ENCODE measurements at regions of chr1 and their contacts with region 1.

Region 1: GRCh38 chr1:153990468-153991150 is at the start of gene RPS27:
- DNase-seq: peak; percentile 95
- ATAC-seq: peak; percentile 82
- H3K4me3 Mint-ChIP-seq: peak within 1 kb of the TSS; percentile 98
- H3K27ac Mint-ChIP-seq: peak within 1 kb of the TSS; percentile 99
- H3K4me1 Mint-ChIP-seq: peaks cover 45% of the 10 kb centered on the region
- H3K27me3 Mint-ChIP-seq: no peaks in the 10 kb centered on the region
- total RNA-seq, gene RPS27: 1,223 to 1,678 TPM

Region 2: DNA sequence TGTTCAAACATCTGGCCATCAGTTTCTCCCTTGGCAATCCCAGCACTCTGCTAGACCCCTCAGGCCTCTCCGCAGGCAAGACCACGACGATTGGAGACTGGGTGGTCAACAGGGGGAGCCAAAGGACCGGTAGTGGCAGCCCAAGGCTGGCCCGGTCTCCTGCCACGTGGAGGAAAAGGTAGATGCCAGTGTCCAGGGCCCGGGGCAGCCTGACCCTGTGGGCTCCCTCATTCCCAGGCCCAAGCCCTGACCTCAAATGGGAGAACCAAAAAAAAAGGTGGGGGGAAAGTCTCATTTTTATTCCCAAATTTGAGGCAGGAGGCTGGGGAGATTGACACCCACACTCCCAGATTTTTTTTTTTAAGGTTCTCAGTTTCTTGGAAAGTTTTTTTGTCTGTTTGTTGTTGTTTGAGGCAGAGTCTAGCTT is 479.6 kb before region 1 on chr1:
- CTCF ChIA-PET with region 1: interaction called, 11 read pairs
- DNase-seq: peak; percentile 87
- ATAC-seq: peak; percentile 94
- H3K4me3 Mint-ChIP-seq: no peak overlapping the region
- H3K27ac Mint-ChIP-seq: peak overlapping the region; percentile 55
- H3K4me1 Mint-ChIP-seq: peaks cover 23% of the 10 kb centered on the region
- H3K27me3 Mint-ChIP-seq: no peaks in the 10 kb centered on the region

Region 3: GRCh38 chr1:153670859-153671627 is 319.6 kb before region 1 on chr1 and contains the start of gene ILF2:
- CTCF ChIA-PET with region 1: interaction called, 26 read pairs
- DNase-seq: peak; percentile 99
- ATAC-seq: peak; percentile 91
- H3K4me3 Mint-ChIP-seq: no peak within 1 kb of the TSS
- H3K27ac Mint-ChIP-seq: no peak within 1 kb of the TSS
- H3K4me1 Mint-ChIP-seq: peaks cover 34% of the 10 kb centered on the region
- H3K27me3 Mint-ChIP-seq: no peaks in the 10 kb centered on the region
- total RNA-seq, gene ILF2: 193 to 260 TPM

Region 4: GRCh38 chr1:153775458-153776327 is 214.9 kb before region 1 on chr1:
- CTCF ChIA-PET with region 1: interaction called, 15 read pairs
- DNase-seq: peak; percentile 90
- ATAC-seq: peak; percentile 78
- H3K4me3 Mint-ChIP-seq: peak overlapping the region; percentile 87
- H3K27ac Mint-ChIP-seq: peak overlapping the region; percentile 97
- H3K4me1 Mint-ChIP-seq: peaks cover 40% of the 10 kb centered on the region
- H3K27me3 Mint-ChIP-seq: no peaks in the 10 kb centered on the region

Region 5: GRCh38 chr1:153805042-153805745 is 185.4 kb before region 1 on chr1:
- CTCF ChIA-PET with region 1: interaction called, 96 read pairs
- DNase-seq: peak; percentile 87
- ATAC-seq: peak; percentile 93
- H3K4me3 Mint-ChIP-seq: no peak overlapping the region
- H3K27ac Mint-ChIP-seq: peak overlapping the region; percentile 74
- H3K4me1 Mint-ChIP-seq: peaks cover 22% of the 10 kb centered on the region
- H3K27me3 Mint-ChIP-seq: no peaks in the 10 kb centered on the region

Region 6: DNA sequence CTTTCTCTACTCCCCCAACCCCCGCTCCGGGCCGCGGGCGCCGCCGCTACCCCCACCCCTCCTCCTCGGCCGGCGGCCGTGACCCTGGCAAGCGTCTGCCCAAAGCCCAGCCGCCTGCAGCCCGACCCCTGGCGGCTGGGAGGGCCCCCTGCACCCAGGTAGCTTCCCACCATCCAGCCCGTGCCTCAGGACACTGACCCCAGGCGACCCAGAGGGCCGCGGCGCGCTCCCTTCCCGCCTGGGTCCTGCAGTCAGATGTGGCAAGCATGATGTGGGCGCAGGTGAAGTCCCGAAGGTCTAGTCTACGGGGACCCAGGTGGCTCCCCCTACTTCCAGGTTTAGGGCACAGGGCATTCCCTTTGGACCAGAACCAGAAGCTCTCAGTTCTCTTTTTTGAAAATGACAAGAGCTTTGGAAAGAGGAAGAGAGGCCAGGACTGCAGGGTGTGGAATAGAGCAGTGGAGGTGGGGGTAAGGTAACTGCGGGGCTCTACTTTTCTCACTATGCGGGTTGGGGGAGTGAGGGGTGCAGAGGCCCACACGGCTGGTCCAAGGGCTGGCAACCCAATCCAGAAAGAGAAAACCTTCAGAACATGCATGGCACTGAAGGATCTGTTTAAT is 43.9 kb before region 1 on chr1 and contains the start of gene DENND4B:
- CTCF ChIA-PET with region 1: interaction called, 32 read pairs
- DNase-seq: peak; percentile 83
- ATAC-seq: peak; percentile 72
- H3K4me3 Mint-ChIP-seq: peak within 1 kb of the TSS; percentile 83
- H3K27ac Mint-ChIP-seq: peak within 1 kb of the TSS; percentile 98
- H3K4me1 Mint-ChIP-seq: peaks cover 27% of the 10 kb centered on the region
- H3K27me3 Mint-ChIP-seq: no peaks in the 10 kb centered on the region
- total RNA-seq, gene DENND4B: 147 to 173 TPM

Region 7: GRCh38 chr1:153967082-153968000 is 23.3 kb before region 1 on chr1 and contains the start of gene CREB3L4:
- CTCF ChIA-PET with region 1: interaction called, 42 read pairs
- DNase-seq: peak; percentile 92
- ATAC-seq: peak; percentile 86
- H3K4me3 Mint-ChIP-seq: peak within 1 kb of the TSS; percentile 97
- H3K27ac Mint-ChIP-seq: peak within 1 kb of the TSS; percentile 96
- H3K4me1 Mint-ChIP-seq: peaks cover 50% of the 10 kb centered on the region
- H3K27me3 Mint-ChIP-seq: no peaks in the 10 kb centered on the region
- total RNA-seq, gene CREB3L4: 6.3 to 8.5 TPM

Region 8: GRCh38 chr1:154014154-154014910 is 23.7 kb after region 1 on chr1:
- CTCF ChIA-PET with region 1: no interaction called
- DNase-seq: no peak
- ATAC-seq: no peak
- H3K4me3 Mint-ChIP-seq: no peak overlapping the region
- H3K27ac Mint-ChIP-seq: no peak overlapping the region
- H3K4me1 Mint-ChIP-seq: no peaks in the 10 kb centered on the region
- H3K27me3 Mint-ChIP-seq: no peaks in the 10 kb centered on the region

Measured in activated CD8-positive, alpha-beta memory T cell treated with anti-CD3 and anti-CD28 coated beads, Interleukin-2, amount 10 ng/mL, durations not matched to agents 7 days and 5 days (primary cell).